Head of caudate nucleus (tissue), 42 donors: ENCODE measurements at regions of chr1 and their contacts with region 1.

Region 1: GRCh38 chr1:168603501-168604110 is 27.2 kb downstream of the XCL1 start:
- DNase-seq: peak; percentile 74 to 94 (median 86)

Region 2: DNA sequence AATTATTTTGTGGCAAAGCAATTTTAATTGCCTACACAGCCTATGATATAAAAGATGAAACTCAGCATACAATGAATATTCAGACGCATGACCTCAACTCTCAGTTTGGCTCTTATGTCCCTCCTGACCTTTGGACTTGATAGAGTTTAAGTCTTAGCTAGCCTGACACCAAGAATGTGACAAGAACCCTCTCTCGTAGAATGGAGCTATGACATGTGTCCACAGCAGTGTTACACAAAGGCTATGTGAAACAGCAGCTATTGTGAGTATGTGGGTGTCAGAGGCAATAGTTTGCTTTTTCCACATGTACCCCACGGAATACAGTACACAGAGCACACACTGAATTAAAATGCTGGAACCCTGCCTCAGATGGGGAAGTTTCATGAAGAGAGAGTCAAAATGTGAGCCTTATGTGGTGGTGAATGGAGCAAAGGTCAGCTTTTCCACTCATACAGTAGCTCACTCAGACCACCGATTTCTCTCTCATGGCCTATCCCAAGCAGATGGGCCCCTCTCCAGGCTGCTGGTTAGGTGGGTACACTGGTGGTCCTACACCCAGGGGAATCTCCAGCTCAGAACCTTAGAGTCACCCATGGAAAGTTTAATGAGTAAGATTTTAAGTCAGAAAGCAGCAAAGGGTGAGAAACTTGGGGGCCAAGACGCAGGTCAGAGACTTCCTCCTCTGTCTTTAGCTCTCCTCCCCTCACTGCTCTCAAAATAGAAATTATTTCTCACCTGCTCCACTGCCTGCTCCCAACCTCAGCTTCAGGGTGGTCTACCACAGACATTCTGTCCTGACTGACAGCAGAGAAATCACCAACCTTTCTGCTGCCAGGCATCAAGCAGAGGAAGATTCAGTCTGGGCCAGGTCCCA is 49.7 kb before region 1 on chr1:
- intact Hi-C with region 1: no loop called
- DNase-seq: no peak

Region 3: GRCh38 chr1:169348383-169349036 is 744.9 kb after region 1 on chr1:
- intact Hi-C with region 1: loop called (anchors 5 kb)
- DNase-seq: peak in 18 of 42 donors; percentile 8 to 71 (median 28)